Aorta (tissue), 5 donors: ENCODE measurements at regions of chr3 and their contacts with region 1.

Region 1: DNA sequence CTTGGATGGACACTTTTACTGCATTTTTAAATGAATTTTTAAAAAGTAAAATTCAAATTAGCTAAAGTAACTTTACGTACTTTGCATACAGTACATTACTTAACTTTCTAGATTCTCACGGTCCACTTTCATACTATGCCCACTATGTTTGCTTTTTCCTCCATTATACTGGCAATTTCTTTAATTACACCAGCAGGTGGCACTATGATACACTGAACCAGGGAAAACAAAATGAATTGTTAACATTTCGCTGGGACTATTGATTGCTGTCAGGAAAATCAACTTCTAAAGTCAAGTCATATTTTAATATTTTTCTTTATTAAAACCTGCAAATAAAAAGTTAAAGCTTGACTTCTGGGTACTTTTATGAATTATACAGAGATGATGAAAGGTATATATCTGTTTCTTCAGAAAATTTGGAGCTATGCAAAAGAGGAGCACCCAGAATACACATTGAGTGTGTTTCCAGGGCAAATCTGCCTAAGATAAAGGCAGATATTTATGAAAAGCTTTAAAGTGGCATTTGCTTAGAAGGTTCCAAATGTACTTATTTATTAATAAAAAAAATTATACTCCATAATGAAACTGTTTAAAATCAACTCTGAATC is 21.8 kb upstream of the POU1F1 start:
- DNase-seq: no peak
- ATAC-seq: peak; percentile 68
- H3K4me3 ChIP-seq: no peak overlapping the region
- H3K27ac ChIP-seq: no peak overlapping the region
- H3K4me1 ChIP-seq: no peaks in the 10 kb centered on the region
- H3K27me3 ChIP-seq: no peaks in the 10 kb centered on the region

Region 2: GRCh38 chr3:87250009-87250408 is 48.2 kb before region 1 on chr3:
- intact Hi-C with region 1: no loop called
- DNase-seq: no peak
- ATAC-seq: no peak
- H3K4me3 ChIP-seq: no peak overlapping the region
- H3K27ac ChIP-seq: no peak overlapping the region
- H3K4me1 ChIP-seq: no peaks in the 10 kb centered on the region
- H3K27me3 ChIP-seq: no peaks in the 10 kb centered on the region

Region 3: DNA sequence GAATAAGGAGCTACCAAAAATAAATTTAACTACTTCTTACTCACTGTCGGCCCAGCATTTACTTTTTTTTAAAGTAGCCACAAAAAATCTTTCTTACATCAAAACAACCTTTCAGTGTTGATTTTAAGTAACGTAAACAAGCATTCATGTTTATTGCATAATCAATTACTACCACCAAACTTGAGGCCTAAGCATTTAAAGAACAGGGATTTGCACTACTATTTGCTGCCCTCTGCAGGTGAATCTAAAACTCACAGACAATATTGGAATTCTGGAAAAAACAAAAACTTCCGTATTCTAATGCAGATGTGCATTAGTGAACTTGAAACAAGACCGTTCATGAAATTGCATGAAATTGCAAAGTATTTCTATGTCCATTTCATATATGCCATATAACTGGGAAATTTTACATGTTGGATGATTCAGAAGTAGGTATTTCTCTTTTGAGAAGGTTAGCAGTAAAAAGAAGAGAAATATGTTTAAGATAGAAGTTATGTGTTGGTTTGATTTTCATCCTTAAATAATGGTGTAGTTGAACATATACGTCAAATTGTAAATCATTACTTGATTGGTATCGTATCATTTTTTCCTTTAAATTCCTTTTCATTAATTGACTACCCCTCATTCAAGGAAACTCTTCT is 705.0 kb after region 1 on chr3:
- intact Hi-C with region 1: loop called in 1 of 2 experiments (anchors 5 kb)
- DNase-seq: no peak
- ATAC-seq: no peak
- H3K4me3 ChIP-seq: no peak overlapping the region
- H3K27ac ChIP-seq: no peak overlapping the region
- H3K4me1 ChIP-seq: no peaks in the 10 kb centered on the region
- H3K27me3 ChIP-seq: no peaks in the 10 kb centered on the region

Region 4: DNA sequence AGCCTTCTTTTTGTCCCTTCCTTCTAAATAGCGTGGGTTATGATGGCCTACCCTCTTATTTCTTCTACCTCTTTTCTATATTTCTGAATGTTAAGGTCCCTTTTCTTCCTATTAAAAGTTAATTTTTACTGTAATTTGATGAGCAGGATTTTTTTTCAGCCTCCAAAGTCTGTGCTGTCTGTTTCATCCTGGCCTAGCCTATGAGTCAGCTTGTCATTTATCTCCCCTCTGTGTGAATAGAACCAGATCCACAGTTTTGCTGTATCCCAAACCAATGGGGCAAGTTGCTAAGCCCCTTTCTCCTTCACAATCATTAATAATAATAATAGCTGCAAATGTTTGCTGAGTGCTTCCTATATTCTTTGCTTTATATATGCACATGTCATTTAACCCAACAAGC is 833.5 kb after region 1 on chr3:
- intact Hi-C with region 1: no loop called
- DNase-seq: no peak
- ATAC-seq: no peak
- H3K4me3 ChIP-seq: no peak overlapping the region
- H3K27ac ChIP-seq: no peak overlapping the region
- H3K4me1 ChIP-seq: no peaks in the 10 kb centered on the region
- H3K27me3 ChIP-seq: no peaks in the 10 kb centered on the region